SK-N-SH (cell line): ENCODE measurements at regions of chr7 and their contacts with region 1.

Region 1: DNA sequence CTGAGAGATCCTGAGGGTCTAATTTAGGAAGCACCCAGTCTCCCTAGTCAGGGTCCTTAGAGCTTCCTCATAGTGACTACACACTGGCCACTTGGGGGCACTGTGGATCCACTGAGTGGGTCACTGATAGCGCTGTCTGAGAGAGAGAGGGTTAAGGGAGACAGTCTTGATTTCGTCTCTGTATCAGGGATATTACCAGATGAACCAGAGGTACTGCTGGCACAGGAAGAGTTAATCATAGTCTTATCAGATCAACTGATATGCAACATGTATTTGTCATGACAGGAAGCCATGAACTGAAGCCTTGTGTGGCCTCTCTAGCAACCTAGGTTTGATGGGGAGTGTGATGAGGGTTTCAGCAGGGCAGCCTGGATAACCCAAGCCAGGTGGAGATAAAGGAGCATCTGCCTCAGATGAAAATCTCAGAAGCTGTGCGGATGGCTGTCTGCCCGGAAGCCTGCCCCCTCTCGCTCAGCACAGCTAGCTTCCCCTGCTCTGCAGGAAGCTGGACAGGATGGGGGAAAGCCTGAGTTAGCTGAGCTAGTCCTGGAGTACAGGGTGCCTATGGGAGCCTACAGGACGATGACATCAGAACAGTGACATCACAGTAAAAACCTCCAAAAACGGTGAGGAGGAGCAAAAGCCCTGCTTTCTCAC is 214.0 kb upstream of the PRSS1 start:
- DNase-seq: peak; percentile 80
- H3K4me3 ChIP-seq: peak overlapping the region; percentile 2 to 10; a peak in 3 of 4 replicates
- H3K27ac ChIP-seq: peak overlapping the region; percentile 14 to 99; a peak in 3 of 4 replicates
- H3K4me1 ChIP-seq: peaks cover 12 to 28% of the 10 kb centered on the region in 2 experiments; a peak in 3 of 4 replicates
- H3K27me3 ChIP-seq: no peaks in the 10 kb centered on the region
- CTCF ChIP-seq: peak; percentile 100
- EP300 ChIP-seq: peak; percentile 95 to 99
- RAD21 ChIP-seq: peak; percentile 100

Region 2: DNA sequence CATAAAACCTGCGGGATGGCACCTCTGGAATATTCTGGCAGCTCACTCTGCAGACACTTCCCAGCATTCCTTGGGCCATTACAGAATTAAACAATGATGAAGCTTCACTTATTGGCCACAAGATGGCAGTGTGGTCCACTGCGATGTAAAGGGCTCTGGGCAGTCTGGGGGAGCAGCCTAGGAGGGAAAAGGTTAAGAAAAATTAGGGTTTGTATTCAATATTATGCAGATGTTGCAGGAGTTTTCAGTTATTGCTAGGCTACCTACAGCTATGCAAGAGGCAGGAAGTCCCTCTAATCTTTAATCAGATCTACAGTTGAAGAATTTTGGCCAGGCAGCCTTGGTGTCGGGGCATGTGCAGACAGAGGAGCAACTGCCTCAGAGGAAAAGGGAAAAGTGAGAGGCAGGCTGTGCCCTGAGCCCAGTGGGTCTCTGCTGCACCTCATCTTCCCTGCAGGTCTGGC is 19.2 kb before region 1 on chr7:
- CTCF ChIA-PET with region 1: interaction called, 167 read pairs
- POLR2A ChIA-PET with region 1: interaction called, 4 read pairs
- DNase-seq: peak; percentile 69
- H3K4me3 ChIP-seq: peak overlapping the region in 1 of 2 experiments; percentile 20; a peak in 1 of 4 replicates
- H3K27ac ChIP-seq: no peak overlapping the region; a peak in 1 of 4 replicates
- H3K4me1 ChIP-seq: peaks cover 0 to 18% of the 10 kb centered on the region in 2 experiments; a peak in 2 of 4 replicates
- H3K27me3 ChIP-seq: peaks cover 33% of the 10 kb centered on the region
- CTCF ChIP-seq: peak; percentile 96
- EP300 ChIP-seq: no peak
- RAD21 ChIP-seq: peak; percentile 85

Region 3: DNA sequence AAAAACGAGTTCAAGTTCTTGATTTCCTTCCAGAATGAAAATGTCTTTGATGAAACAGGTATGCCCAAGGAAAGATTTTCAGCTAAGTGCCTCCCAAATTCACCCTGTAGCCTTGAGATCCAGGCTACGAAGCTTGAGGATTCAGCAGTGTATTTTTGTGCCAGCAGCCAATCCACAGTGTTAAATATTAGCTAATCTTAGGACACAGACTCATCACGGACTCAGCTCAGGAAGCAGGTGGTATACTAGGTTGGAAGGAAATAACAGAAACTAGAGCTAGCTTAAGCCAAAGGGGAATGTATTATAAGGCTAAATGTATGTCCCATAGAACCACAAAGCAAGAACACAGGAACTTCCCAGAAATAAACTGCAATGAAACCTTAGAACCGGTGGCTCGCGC is 63.0 kb after region 1 on chr7:
- CTCF ChIA-PET with region 1: interaction called, 221 read pairs
- POLR2A ChIA-PET with region 1: interaction called, 6 read pairs
- DNase-seq: no peak
- H3K4me3 ChIP-seq: no peak overlapping the region
- H3K27ac ChIP-seq: no peak overlapping the region
- H3K4me1 ChIP-seq: peaks cover 0 to 8% of the 10 kb centered on the region in 2 experiments; a peak in 1 of 4 replicates
- H3K27me3 ChIP-seq: peaks cover 12% of the 10 kb centered on the region; the same call in 1 of the 2 replicates
- CTCF ChIP-seq: no peak
- EP300 ChIP-seq: no peak
- RAD21 ChIP-seq: no peak

Region 4: GRCh38 chr7:142646386-142647140 is 111.3 kb after region 1 on chr7:
- CTCF ChIA-PET with region 1: interaction called, 35 read pairs
- POLR2A ChIA-PET with region 1: no interaction called
- DNase-seq: peak; percentile 43
- H3K4me3 ChIP-seq: peak overlapping the region; percentile 2 to 24; a peak in 1 of 4 replicates
- H3K27ac ChIP-seq: peak overlapping the region in 1 of 2 experiments; percentile 98; a peak in 2 of 4 replicates
- H3K4me1 ChIP-seq: peaks cover 0 to 25% of the 10 kb centered on the region in 2 experiments; a peak in 2 of 4 replicates
- H3K27me3 ChIP-seq: peaks cover 15% of the 10 kb centered on the region; the same call in 1 of the 2 replicates
- CTCF ChIP-seq: no peak
- EP300 ChIP-seq: peak in 1 of 2 experiments; percentile 81; a peak in 2 of 4 replicates
- RAD21 ChIP-seq: no peak; the same call in none of the 2 replicates

Region 5: DNA sequence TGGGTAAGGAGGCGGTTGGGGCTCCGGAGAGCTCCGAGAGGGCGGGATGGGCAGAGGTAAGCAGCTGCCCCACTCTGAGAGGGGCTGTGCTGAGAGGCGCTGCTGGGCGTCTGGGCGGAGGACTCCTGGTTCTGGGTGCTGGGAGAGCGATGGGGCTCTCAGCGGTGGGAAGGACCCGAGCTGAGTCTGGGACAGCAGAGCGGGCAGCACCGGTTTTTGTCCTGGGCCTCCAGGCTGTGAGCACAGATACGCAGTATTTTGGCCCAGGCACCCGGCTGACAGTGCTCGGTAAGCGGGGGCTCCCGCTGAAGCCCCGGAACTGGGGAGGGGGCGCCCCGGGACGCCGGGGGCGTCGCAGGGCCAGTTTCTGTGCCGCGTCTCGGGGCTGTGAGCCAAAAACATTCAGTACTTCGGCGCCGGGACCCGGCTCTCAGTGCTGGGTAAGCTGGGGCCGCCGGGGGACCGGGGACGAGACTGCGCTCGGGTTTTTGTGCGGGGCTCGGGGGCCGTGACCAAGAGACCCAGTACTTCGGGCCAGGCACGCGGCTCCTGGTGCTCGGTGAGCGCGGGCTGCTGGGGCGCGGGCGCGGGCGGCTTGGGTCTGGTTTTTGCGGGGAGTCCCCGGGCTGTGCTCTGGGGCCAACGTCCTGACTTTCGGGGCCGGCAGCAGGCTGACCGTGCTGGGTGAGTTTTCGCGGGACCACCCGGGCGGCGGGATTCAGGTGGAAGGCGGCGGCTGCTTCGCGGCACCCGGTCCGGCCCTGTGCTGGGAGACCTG is 261.5 kb after region 1 on chr7:
- CTCF ChIA-PET with region 1: interaction called, 291 read pairs
- POLR2A ChIA-PET with region 1: interaction called, 3 read pairs
- DNase-seq: peak; percentile 75
- H3K4me3 ChIP-seq: peak overlapping the region in 1 of 2 experiments; percentile 28; a peak in 1 of 4 replicates
- H3K27ac ChIP-seq: no peak overlapping the region
- H3K4me1 ChIP-seq: peaks cover 0 to 9% of the 10 kb centered on the region in 2 experiments; a peak in 1 of 4 replicates
- H3K27me3 ChIP-seq: peaks cover 61% of the 10 kb centered on the region
- CTCF ChIP-seq: no peak
- EP300 ChIP-seq: no peak
- RAD21 ChIP-seq: no peak

Region 6: GRCh38 chr7:143172354-143172753 is 637.1 kb after region 1 on chr7:
- CTCF ChIA-PET with region 1: no interaction called
- POLR2A ChIA-PET with region 1: no interaction called
- DNase-seq: no peak
- H3K4me3 ChIP-seq: peak overlapping the region; percentile 33 to 52; a peak in 3 of 4 replicates
- H3K27ac ChIP-seq: no peak overlapping the region
- H3K4me1 ChIP-seq: no peaks in the 10 kb centered on the region
- H3K27me3 ChIP-seq: no peaks in the 10 kb centered on the region; the same call in 1 of the 2 replicates
- CTCF ChIP-seq: no peak
- EP300 ChIP-seq: no peak
- RAD21 ChIP-seq: no peak

Region 7: GRCh38 chr7:143214789-143215679 is 679.8 kb after region 1 on chr7:
- CTCF ChIA-PET with region 1: interaction called, 35 read pairs
- POLR2A ChIA-PET with region 1: no interaction called
- DNase-seq: peak; percentile 77
- H3K4me3 ChIP-seq: no peak overlapping the region; a peak in 1 of 4 replicates
- H3K27ac ChIP-seq: no peak overlapping the region
- H3K4me1 ChIP-seq: no peaks in the 10 kb centered on the region
- H3K27me3 ChIP-seq: peaks cover 7% of the 10 kb centered on the region; the same call in 1 of the 2 replicates
- CTCF ChIP-seq: peak; percentile 100
- EP300 ChIP-seq: no peak
- RAD21 ChIP-seq: peak; percentile 100